HAP-1 (cell line): ENCODE measurements at regions of chr22 and their contacts with region 1.

Region 1: DNA sequence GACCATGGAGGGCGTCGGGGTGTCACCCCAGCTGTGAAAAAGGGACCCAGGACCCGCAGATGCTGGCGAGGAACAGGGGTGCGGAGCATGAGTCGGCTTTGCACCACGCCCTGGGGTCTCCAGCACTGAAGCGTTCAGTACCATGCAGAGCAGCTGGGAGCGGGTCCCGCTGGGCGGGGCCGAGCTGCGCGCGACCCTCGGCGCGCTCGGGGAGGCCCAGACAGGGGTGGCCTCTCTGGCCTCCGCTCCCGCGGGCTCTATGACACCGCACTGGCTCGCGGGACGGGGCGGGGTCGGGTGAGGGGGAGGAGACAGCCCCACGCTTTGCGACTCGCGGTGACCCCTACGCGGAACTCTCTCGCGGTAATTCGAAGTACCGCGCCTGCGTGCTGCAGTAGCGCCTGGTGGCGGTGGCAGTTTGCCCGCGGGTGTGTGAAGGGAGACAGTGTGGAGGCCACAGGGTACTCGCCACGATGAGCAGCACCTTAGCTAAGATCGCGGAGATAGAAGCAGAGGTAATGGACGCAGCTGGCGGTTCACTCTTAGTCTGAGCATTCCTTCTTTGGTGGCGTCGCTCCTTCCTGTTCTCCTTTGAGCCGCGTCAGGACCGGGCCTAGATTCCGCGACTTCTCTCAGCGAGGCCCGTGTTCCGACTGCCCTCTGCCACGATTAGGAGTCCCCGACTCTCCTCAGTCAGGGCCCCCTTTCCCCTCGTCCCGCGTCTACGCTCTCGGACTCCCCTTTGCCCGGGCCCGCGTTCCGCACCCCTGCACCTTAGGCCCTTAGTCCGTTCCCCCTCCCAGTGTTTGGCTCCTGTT is at the start of gene DRG1:
- DNase-seq: peak; percentile 94 to 99
- H3K4me3 ChIP-seq: peak within 1 kb of the TSS; percentile 90
- H3K4me1 ChIP-seq: peaks cover 8% of the 10 kb centered on the region
- H3K27me3 ChIP-seq: no peaks in the 10 kb centered on the region

Region 2: GRCh38 chr22:31290494-31291471 is 108.6 kb before region 1 on chr22:
- in situ Hi-C with region 1: loop called (anchors 25 kb)
- DNase-seq: peak; percentile 87 to 94
- H3K4me3 ChIP-seq: peak overlapping the region; percentile 39
- H3K4me1 ChIP-seq: peaks cover 18% of the 10 kb centered on the region
- H3K27me3 ChIP-seq: no peaks in the 10 kb centered on the region

Region 3: GRCh38 chr22:31345331-31346254 is 53.8 kb before region 1 on chr22:
- in situ Hi-C with region 1: loop called (anchors 5 kb)
- DNase-seq: peak; percentile 86 to 89
- H3K4me3 ChIP-seq: peak overlapping the region; percentile 57
- H3K4me1 ChIP-seq: peaks cover 24% of the 10 kb centered on the region
- H3K27me3 ChIP-seq: no peaks in the 10 kb centered on the region